ENCODE measurements at regions of chr16 and their contacts with region 1.

Region 1: DNA sequence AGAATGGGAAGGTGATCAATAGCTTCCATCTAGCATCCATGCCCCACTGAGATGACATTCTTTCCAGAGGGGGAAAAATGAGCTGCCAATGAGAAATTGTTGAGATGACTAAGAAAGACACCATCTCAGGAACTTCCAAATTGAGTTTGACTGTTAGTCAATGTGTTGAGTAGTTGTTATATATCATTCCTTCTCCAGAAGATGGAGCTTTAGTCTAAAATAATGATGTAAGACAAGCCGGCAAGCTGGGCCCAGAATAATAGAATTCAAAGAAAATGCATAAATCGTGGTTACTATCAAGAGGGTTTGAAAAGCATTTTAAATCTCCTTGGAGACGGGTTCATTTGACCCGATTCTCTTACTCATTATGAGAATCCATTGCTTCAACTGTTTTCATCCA is 71.0 kb upstream of the ATF7IP2 start:
- DNase-seq: no peak
- ATAC-seq: no peak

Region 2: GRCh38 chr16:10256784-10257641 is 57.8 kb before region 1 on chr16:
- intact Hi-C with region 1: no loop called
- DNase-seq: no peak
- ATAC-seq: no peak

Region 3: GRCh38 chr16:10385725-10386516 is 71.1 kb after region 1 on chr16 and contains the start of gene ATF7IP2:
- intact Hi-C with region 1: loop called (anchors 5 kb)
- DNase-seq: peak; percentile 94
- ATAC-seq: peak; percentile 99
- total RNA-seq, gene ATF7IP2: 43.0 TPM

Measured in Right ventricle myocardium inferior (tissue), 1 donor.